ENCODE measurements at regions of chr10 and their contacts with region 1.

Region 1: DNA sequence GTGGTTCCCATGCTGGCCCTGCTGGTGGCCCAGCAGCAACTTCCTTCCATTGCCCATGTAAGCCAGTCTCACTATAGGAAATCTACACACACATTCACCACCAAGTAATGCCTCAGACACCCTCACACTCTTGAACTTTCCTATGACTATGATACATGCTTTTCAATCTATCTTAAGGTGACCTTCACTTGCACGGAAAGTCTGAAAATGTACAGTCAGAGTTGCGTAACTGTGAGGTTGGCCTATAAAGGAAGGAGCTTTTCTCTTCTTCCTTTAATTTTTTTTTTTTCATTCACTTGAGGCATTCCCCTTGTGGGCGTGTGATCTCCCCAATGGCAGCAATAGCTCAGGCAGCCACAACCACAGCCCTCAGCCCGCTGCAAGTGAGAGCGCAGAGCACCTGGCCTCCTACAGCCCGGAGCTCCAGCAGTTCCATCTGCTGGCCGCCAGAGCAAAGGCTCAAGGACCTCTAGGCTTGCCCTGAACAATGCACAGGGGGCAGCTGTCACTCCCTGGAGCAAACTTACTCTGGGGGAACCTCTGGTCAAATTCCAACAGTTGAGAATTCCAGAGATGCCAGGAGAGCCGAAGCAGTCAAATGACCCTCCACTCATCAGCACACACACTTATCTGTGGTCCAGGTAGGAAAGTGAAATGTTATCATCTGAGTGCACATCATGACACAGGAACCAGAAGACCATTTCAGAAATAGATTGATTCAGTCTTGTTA is 123.1 kb upstream of the ADO start:
- DNase-seq: peak; percentile 90
- ATAC-seq: peak; percentile 98
- H3K4me3 ChIP-seq: no peak overlapping the region
- H3K27ac ChIP-seq: peak overlapping the region; percentile 65
- H3K4me1 ChIP-seq: peaks cover 33% of the 10 kb centered on the region
- H3K27me3 ChIP-seq: no peaks in the 10 kb centered on the region
- CTCF ChIP-seq: peak; percentile 71 to 82 (median 77)
- EP300 ChIP-seq: peak; percentile 91 to 96
- POLR2A ChIP-seq: no peak
- RAD21 ChIP-seq: peak; percentile 82

Region 2: GRCh38 chr10:62095181-62096071 is 586.0 kb before region 1 on chr10:
- CTCF ChIA-PET with region 1: no interaction called
- POLR2A ChIA-PET with region 1: no interaction called
- RAD21 ChIA-PET with region 1: no interaction called
- SMC1A ChIA-PET with region 1: no interaction called
- in situ Hi-C with region 1: no loop called
- intact Hi-C with region 1: no loop called
- DNase-seq: no peak
- ATAC-seq: no peak
- H3K4me3 ChIP-seq: no peak overlapping the region
- H3K27ac ChIP-seq: no peak overlapping the region
- H3K4me1 ChIP-seq: no peaks in the 10 kb centered on the region
- H3K27me3 ChIP-seq: no peaks in the 10 kb centered on the region
- CTCF ChIP-seq: no peak
- EP300 ChIP-seq: no peak
- POLR2A ChIP-seq: no peak
- RAD21 ChIP-seq: no peak

Region 3: GRCh38 chr10:62583876-62584615 is 97.3 kb before region 1 on chr10:
- CTCF ChIA-PET with region 1: no interaction called
- POLR2A ChIA-PET with region 1: no interaction called
- RAD21 ChIA-PET with region 1: no interaction called
- SMC1A ChIA-PET with region 1: no interaction called
- in situ Hi-C with region 1: no loop called
- intact Hi-C with region 1: no loop called
- DNase-seq: no peak
- ATAC-seq: peak; percentile 52
- H3K4me3 ChIP-seq: no peak overlapping the region
- H3K27ac ChIP-seq: no peak overlapping the region
- H3K4me1 ChIP-seq: no peaks in the 10 kb centered on the region
- H3K27me3 ChIP-seq: no peaks in the 10 kb centered on the region
- CTCF ChIP-seq: no peak
- EP300 ChIP-seq: no peak
- POLR2A ChIP-seq: no peak
- RAD21 ChIP-seq: no peak

Region 4: DNA sequence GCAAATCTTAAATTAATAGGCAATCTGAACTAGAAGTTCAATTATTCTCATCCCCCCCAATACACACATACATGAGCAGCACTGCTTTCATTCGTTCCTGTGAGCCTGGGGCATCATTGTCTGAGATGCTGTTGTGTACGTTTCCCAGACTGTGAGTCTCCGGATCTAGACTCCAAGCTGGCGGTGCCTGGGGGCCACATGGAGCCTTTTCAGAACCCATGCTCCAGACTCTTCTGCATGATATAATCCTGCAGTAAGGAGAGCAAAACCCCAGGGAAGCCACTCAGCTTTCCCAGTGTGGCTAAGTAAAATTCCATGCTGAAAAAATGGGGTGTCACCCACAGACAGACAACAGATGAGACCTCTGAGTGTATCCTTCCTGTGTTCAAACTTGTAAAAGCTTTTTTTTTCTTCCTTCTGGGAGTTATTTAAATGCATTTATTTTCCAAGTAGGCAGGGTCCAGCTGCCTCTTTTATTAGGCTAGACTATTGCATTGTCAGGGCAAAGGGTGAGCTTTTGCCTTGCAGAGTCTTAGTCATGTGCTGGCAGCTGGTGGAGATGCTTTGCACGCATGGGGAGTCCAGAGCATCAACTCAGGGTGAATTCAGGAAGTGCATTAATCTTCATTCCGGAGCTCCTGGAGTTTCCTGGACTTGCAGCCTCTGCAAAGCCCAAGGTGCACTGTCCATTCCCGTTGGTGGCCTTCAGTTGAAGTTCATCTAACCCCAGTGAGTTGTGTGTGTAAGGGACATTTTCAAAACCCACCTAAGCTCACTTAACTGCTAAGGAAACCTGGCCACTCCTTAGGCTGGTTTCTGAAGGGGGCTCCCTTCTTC is 62.6 kb before region 1 on chr10:
- CTCF ChIA-PET with region 1: interaction called, 45 read pairs
- POLR2A ChIA-PET with region 1: interaction called, 11 read pairs
- RAD21 ChIA-PET with region 1: interaction called, 81 read pairs
- SMC1A ChIA-PET with region 1: interaction called, 48 read pairs
- in situ Hi-C with region 1: no loop called
- intact Hi-C with region 1: no loop called
- DNase-seq: no peak
- ATAC-seq: peak; percentile 58
- H3K4me3 ChIP-seq: no peak overlapping the region
- H3K27ac ChIP-seq: 0 out of 2 replicates have a peak overlapping the region, but pooled peaks have one; percentile 2
- H3K4me1 ChIP-seq: peaks cover 30% of the 10 kb centered on the region
- H3K27me3 ChIP-seq: no peaks in the 10 kb centered on the region
- CTCF ChIP-seq: no peak
- EP300 ChIP-seq: no peak
- POLR2A ChIP-seq: no peak
- RAD21 ChIP-seq: no peak

Region 5: GRCh38 chr10:62647375-62648092 is 33.8 kb before region 1 on chr10:
- CTCF ChIA-PET with region 1: interaction called, 41 read pairs
- POLR2A ChIA-PET with region 1: interaction called, 5 read pairs
- RAD21 ChIA-PET with region 1: interaction called, 6 read pairs
- SMC1A ChIA-PET with region 1: interaction called, 20 read pairs
- in situ Hi-C with region 1: no loop called
- intact Hi-C with region 1: no loop called
- DNase-seq: no peak
- ATAC-seq: peak; percentile 59
- H3K4me3 ChIP-seq: no peak overlapping the region
- H3K27ac ChIP-seq: no peak overlapping the region
- H3K4me1 ChIP-seq: peaks cover 29% of the 10 kb centered on the region
- H3K27me3 ChIP-seq: no peaks in the 10 kb centered on the region
- CTCF ChIP-seq: no peak
- EP300 ChIP-seq: peak; percentile 29 to 40; a peak in 1 of 4 replicates
- POLR2A ChIP-seq: no peak
- RAD21 ChIP-seq: no peak

Region 6: GRCh38 chr10:62696798-62697197 is 15.4 kb after region 1 on chr10:
- CTCF ChIA-PET with region 1: interaction called, 10 read pairs
- POLR2A ChIA-PET with region 1: interaction called, 3 read pairs
- RAD21 ChIA-PET with region 1: interaction called, 13 read pairs
- SMC1A ChIA-PET with region 1: interaction called, 38 read pairs
- in situ Hi-C with region 1: no loop called
- intact Hi-C with region 1: no loop called
- DNase-seq: no peak
- ATAC-seq: peak; percentile 62
- H3K4me3 ChIP-seq: no peak overlapping the region
- H3K27ac ChIP-seq: no peak overlapping the region
- H3K4me1 ChIP-seq: peaks cover 2% of the 10 kb centered on the region
- H3K27me3 ChIP-seq: no peaks in the 10 kb centered on the region
- CTCF ChIP-seq: no peak
- EP300 ChIP-seq: no peak
- POLR2A ChIP-seq: no peak
- RAD21 ChIP-seq: no peak

Region 7: DNA sequence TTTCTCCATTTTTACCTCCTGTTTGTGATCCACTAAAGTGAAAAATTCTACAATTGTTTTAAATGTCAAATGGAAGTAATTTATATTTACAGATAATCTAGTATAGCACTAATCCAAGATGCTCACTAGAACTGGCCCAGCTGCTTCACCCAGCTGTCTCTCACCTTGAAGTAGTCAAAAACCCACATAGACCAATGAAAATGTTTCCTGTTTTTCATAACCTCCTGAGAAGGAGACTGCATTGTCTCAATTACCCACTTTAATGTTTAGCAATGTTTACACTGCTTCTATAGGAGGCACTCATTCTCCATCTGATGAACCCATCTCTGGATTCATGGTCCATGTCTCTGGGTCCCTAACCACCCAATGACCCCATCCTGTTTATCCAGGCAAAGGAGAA is 67.0 kb after region 1 on chr10:
- CTCF ChIA-PET with region 1: no interaction called
- POLR2A ChIA-PET with region 1: no interaction called
- RAD21 ChIA-PET with region 1: interaction called, 10 read pairs
- SMC1A ChIA-PET with region 1: interaction called, 7 read pairs
- in situ Hi-C with region 1: no loop called
- intact Hi-C with region 1: no loop called
- DNase-seq: no peak
- ATAC-seq: peak; percentile 45
- H3K4me3 ChIP-seq: no peak overlapping the region
- H3K27ac ChIP-seq: no peak overlapping the region
- H3K4me1 ChIP-seq: peaks cover 13% of the 10 kb centered on the region; the same call in 1 of the 2 replicates
- H3K27me3 ChIP-seq: no peaks in the 10 kb centered on the region
- CTCF ChIP-seq: no peak
- EP300 ChIP-seq: no peak
- POLR2A ChIP-seq: no peak
- RAD21 ChIP-seq: peak; percentile 37; the same call in 1 of the 2 replicates

Region 8: GRCh38 chr10:62811159-62811875 is 129.9 kb after region 1 on chr10:
- CTCF ChIA-PET with region 1: interaction called, 25 read pairs
- POLR2A ChIA-PET with region 1: interaction called, 11 read pairs
- RAD21 ChIA-PET with region 1: interaction called, 67 read pairs
- SMC1A ChIA-PET with region 1: interaction called, 49 read pairs
- in situ Hi-C with region 1: no loop called
- intact Hi-C with region 1: no loop called
- DNase-seq: peak; percentile 85
- ATAC-seq: peak; percentile 62
- H3K4me3 ChIP-seq: peak overlapping the region; percentile 25; the same call in 1 of the 2 replicates
- H3K27ac ChIP-seq: peak overlapping the region; percentile 42; the same call in 1 of the 2 replicates
- H3K4me1 ChIP-seq: peaks cover 20% of the 10 kb centered on the region
- H3K27me3 ChIP-seq: no peaks in the 10 kb centered on the region
- CTCF ChIP-seq: no peak
- EP300 ChIP-seq: peak; percentile 80 to 86; a peak in 3 of 4 replicates
- POLR2A ChIP-seq: 0 out of 2 replicates have a peak, but pooled peaks have one; percentile 21
- RAD21 ChIP-seq: 0 out of 2 replicates have a peak, but pooled peaks have one; percentile 6

Region 9: DNA sequence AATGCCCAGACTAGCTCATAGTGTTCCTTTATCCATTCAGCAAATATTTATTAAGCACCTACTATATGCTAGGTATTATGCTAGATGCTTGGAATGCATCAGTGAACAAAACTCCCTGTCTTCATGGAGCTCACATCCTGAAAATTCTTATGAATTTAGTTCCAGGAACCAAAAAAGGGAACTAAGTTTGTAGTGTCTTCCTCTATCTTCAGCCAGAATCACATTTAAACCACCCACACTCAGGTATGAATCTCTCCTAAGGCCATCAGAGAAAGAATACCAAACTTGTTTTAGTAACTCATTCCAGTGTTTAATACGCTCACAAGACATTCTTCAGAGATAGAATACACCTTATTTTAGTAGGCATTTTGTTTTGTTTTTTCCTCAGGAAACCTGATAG is 144.9 kb after region 1 on chr10:
- CTCF ChIA-PET with region 1: no interaction called
- POLR2A ChIA-PET with region 1: no interaction called
- RAD21 ChIA-PET with region 1: no interaction called
- SMC1A ChIA-PET with region 1: no interaction called
- in situ Hi-C with region 1: no loop called
- intact Hi-C with region 1: no loop called
- DNase-seq: no peak
- ATAC-seq: no peak
- H3K4me3 ChIP-seq: no peak overlapping the region
- H3K27ac ChIP-seq: no peak overlapping the region
- H3K4me1 ChIP-seq: 0 out of 2 replicates have a peak, but pooled peaks cover 2% of the 10 kb centered on the region
- H3K27me3 ChIP-seq: no peaks in the 10 kb centered on the region
- CTCF ChIP-seq: no peak
- EP300 ChIP-seq: no peak
- POLR2A ChIP-seq: no peak
- RAD21 ChIP-seq: no peak

Region 10: DNA sequence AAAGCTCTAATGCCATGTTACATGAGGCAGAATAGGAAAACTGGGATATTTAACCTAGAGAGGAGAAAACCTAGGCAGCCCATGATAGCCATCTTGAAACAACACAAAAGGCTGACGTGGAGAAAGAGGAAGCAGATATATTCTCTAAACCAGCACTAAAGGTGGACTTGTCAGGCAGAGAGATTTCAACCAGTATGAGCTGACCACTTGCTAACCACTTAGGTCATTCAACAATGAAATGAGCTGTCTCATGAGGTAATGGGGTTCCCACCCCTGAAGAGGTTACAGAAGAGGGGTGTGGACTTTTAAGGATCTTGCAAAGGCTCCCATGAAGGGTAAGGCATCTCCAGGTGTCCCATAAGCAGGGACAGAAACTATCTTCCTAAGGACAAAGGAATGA is 161.6 kb after region 1 on chr10:
- CTCF ChIA-PET with region 1: no interaction called
- POLR2A ChIA-PET with region 1: no interaction called
- RAD21 ChIA-PET with region 1: no interaction called
- SMC1A ChIA-PET with region 1: no interaction called
- in situ Hi-C with region 1: no loop called
- intact Hi-C with region 1: no loop called
- DNase-seq: no peak
- ATAC-seq: peak; percentile 94
- H3K4me3 ChIP-seq: no peak overlapping the region
- H3K27ac ChIP-seq: no peak overlapping the region
- H3K4me1 ChIP-seq: no peaks in the 10 kb centered on the region
- H3K27me3 ChIP-seq: no peaks in the 10 kb centered on the region
- CTCF ChIP-seq: no peak
- EP300 ChIP-seq: peak in 1 of 2 experiments; percentile 66; a peak in 2 of 4 replicates
- POLR2A ChIP-seq: no peak
- RAD21 ChIP-seq: no peak

Region 11: DNA sequence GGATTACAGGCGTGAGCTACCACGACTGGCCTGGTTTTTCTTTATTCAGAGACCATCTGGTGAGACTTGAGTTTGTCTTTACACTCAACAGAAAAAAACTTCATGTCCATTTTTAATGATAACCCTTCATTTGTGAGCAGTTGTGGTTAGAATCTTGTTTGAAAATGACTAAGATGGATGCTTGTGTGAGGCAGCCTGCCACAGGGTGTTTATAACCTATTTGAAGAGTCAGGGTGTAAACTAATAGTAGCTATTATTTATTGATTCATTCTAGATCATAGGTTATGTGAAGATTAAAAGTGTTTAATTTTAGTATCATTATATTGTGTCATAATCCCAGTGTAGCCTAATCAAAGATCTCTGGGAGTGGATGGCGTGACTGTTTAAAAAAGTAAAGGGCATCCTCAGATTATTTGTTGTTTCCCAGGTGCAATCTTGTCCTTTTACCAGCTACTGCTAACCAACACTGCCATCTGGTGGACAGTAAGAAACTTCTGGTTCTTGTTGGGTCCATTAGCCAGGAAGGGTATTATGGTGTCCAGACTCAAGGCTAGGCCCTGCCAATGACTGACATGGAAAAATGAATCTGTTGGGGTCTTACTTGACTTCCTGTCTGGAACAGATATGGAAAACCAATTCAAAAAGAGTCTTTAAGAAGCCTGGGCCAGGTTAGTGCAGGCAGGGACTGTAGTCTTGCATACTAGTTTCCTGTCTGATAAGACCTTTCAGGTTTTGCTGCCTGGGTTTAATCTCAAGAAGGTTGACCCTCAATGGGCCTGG is 476.7 kb after region 1 on chr10:
- CTCF ChIA-PET with region 1: interaction called, 4 read pairs
- POLR2A ChIA-PET with region 1: no interaction called
- RAD21 ChIA-PET with region 1: interaction called, 3 read pairs
- SMC1A ChIA-PET with region 1: no interaction called
- in situ Hi-C with region 1: no loop called
- intact Hi-C with region 1: loop called (anchors 1 kb)
- DNase-seq: peak; percentile 49
- ATAC-seq: peak; percentile 89
- H3K4me3 ChIP-seq: no peak overlapping the region
- H3K27ac ChIP-seq: 0 out of 2 replicates have a peak overlapping the region, but pooled peaks have one; percentile 31
- H3K4me1 ChIP-seq: peaks cover 3% of the 10 kb centered on the region; the same call in 1 of the 2 replicates
- H3K27me3 ChIP-seq: no peaks in the 10 kb centered on the region
- CTCF ChIP-seq: peak; percentile 70 to 86 (median 74); a peak in 5 of 6 replicates
- EP300 ChIP-seq: no peak
- POLR2A ChIP-seq: no peak
- RAD21 ChIP-seq: peak; percentile 97

Measured in GM12878 (cell line).